Posterior vena cava (tissue), 2 donors: ENCODE measurements at regions of chr4 and their contacts with region 1.

Region 1: DNA sequence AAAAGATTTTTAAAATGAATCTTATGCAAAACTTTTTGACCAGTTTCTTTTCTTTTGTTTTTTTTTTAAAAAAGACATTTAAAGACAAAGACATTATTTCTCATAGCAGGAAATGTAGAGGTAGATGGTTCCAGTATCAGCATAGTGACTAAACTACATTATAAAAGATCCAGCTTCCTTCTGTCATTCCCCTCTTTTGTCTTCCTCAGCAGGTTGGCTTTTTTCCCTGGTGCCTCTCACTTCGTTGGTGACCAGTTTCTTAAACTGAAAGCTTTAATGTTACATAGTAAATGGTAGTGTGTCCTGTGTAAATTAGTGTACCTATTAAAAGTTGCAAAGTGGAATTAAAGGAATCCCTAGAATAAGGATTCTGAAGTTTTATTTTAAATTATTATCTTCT is 36.1 kb downstream of the DCK start:
- DNase-seq: no peak

Region 2: DNA sequence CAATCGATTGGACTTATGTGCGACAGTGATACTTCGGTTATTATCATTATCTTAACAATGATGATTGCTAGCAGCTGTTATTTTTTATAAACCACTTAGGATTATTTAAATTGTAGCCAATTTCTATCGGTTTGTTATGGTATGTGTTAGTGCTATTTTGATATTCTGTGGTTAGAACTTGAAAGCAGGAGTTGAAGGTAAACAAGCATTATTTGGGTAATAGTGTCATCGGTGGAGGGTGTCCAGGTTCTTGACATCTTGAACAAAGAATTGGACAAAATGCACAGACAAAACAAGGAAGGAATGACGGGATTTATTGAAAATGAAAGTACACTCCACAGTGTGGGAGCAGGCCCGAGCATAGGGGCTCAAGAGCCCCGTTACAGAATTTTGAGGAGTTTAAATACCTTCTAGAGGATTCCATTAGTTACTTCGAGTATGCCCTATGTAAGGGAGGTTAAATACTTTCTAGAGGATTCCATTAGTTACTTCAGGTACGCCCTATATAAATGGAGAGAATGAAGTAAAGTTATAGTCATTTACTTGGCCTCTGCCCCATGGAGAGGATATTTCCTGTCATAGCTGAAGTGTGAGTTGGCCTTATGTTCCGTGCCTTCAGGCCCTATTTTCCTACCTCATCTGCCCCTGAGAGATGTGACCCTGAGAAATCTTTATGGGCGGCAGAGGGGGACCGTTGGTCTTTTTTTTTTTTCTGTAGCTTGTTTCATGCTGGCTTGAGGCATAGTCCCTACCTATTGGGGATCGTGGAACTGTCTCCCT is 114.3 kb before region 1 on chr4:
- intact Hi-C with region 1: no loop called
- DNase-seq: no peak

Region 3: DNA sequence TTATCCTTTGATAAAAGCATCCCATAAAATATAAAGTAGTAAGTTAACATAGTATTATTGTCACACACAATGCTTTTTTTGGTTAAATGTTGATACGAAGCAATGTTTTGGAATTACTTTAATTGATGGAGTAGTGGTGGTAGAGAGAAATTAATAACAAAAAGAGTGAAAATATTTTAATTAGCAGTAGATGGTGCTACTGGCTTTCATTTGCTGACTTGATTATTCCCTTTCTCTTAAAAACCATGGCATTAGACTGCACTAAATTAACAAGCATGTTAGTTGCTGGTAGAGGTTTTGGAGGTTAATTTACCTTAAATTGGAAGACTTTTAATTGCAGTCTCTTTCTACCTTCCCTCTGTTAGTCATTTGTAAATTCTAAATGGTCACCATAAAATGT is 44.9 kb before region 1 on chr4:
- intact Hi-C with region 1: no loop called
- DNase-seq: no peak

Region 4: GRCh38 chr4:70996018-70996360 is 33.5 kb before region 1 on chr4:
- intact Hi-C with region 1: loop called in 1 of 2 experiments (anchors 1 kb)
- DNase-seq: no peak

Region 5: DNA sequence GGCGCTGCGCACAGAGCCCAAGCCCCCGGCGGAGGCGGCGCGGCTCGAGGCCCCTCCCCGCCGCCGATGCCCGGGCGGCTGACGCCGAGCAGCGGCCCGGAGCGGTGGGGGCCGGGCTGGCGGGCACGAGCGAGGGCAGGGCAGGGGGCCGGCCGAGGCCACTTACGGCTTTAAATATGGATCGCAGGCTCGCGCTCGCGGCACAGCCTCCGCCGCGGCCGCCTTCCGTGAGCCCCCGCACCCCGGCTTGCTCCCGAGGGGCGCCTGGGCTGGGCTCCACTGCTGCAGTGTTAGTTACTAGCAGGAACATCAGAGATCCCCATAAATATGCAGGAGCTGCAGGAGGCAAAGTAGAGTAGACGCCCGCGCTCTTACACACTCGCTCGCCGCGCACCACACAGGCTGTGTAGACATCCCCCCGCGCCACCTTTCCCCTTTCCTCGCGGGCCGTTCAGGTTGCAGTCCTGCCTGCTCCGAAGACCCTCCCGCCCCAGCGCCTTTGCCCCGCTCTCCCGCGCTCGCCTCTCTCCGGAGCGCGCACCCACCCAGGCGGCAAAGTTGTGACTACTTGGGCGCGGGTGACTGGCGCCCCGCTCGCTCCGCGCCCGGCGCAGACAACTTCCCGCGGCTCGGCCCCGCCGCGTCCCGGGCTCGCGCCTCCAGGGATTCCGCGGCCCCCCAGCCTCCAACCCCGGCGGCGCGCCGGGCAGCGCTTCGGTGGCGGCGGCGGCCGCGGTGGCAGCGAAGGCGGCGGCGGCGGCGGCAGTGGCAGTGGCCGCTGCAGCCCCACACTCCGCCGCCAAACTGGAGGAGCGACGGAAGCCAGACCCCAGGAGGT is 157.3 kb after region 1 on chr4:
- intact Hi-C with region 1: no loop called
- DNase-seq: peak; percentile 80